Activated CD4-positive, alpha-beta T cell treated with anti-CD3 and anti-CD28 coated beads for 36 hours (primary cell): ENCODE measurements at regions of chr12 and their contacts with region 1.

Region 1: DNA sequence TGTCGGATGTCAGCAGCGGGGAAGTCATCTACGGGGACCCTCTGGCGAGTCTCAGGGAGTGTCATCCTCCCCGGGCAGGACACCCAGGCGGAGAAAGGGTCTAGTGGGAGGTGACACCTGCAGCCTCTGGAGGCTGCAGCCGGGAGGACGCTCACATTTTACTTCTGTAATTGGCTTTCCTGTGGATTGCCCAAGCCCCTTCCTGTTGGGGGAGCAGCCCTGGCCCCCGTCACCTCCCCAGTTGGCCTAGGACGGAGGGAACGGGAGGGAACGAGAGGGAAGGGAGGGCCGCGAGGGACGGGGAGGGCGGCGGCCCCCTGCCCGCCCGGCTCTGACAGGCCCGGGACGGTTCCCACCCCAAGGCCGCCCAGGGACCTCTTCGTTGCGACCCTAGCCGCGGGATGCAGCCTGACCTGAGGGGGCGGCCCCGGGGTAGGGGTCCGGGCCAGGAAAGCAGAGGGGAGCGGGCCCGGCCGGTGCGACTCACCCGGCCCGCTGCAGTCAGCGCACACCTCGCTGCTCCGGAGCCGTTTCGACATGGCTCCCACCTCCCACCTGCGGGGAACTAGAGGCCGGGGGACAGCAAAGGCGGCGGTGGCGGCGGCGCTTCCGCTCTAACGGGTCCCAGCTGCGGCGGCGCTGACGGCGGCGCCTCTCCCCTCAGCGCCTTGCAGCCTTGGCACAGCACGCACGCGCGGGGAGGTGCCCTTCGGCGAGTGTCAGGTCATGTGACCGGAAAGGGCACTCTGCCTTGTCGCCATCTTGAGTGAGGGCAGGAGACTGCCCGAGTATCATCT is at the start of gene GIT2:
- DNase-seq: peak; percentile 98
- ATAC-seq: peak; percentile 85
- H3K4me3 Mint-ChIP-seq: peak within 1 kb of the TSS; percentile 99
- H3K27ac Mint-ChIP-seq: peak within 1 kb of the TSS; percentile 97
- H3K4me1 Mint-ChIP-seq: peaks cover 65% of the 10 kb centered on the region
- H3K27me3 Mint-ChIP-seq: no peaks in the 10 kb centered on the region
- total RNA-seq, gene GIT2: 50.2 to 58.2 TPM

Region 2: GRCh38 chr12:109477185-109477962 is 518.5 kb before region 1 on chr12 and contains the starts of genes KCTD10 and UBE3B:
- CTCF ChIA-PET with region 1: no interaction called
- POLR2A ChIA-PET with region 1: no interaction called
- intact Hi-C with region 1: loop called in 1 of 2 experiments (anchors 1 kb)
- DNase-seq: peak; percentile 92
- ATAC-seq: peak; percentile 97
- H3K4me3 Mint-ChIP-seq: peak within 1 kb of the TSS; percentile 95
- H3K27ac Mint-ChIP-seq: peak within 1 kb of the TSS; percentile 99
- H3K4me1 Mint-ChIP-seq: peaks cover 43% of the 10 kb centered on the region
- H3K27me3 Mint-ChIP-seq: no peaks in the 10 kb centered on the region
- total RNA-seq, gene KCTD10: 42.0 to 46.3 TPM
- total RNA-seq, gene UBE3B: 25.7 to 27.2 TPM

Region 3: DNA sequence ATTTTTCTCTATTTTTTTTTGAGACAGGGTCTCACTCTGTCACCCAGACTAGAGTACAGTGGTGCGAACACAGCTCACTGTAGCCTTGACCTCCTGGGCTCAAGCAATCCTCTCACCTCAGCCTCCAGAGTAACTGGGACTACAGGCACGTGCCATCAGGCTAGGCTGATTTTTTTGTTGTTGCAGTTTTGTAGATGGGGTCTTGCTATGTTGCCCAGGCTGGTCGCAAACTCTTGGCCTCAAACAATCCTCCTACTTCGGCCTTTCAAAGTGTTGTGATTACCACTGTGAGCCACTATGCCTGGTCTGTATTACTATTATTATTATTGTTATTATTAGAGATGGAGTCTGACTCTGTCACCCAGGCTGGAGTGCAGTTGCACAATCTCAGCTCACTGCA is 23.1 kb before region 1 on chr12:
- CTCF ChIA-PET with region 1: interaction called, 3 read pairs
- POLR2A ChIA-PET with region 1: interaction called, 11 read pairs
- intact Hi-C with region 1: loop called in 1 of 2 experiments (anchors 2 kb)
- DNase-seq: no peak
- ATAC-seq: no peak
- H3K4me3 Mint-ChIP-seq: no peak overlapping the region
- H3K27ac Mint-ChIP-seq: no peak overlapping the region
- H3K4me1 Mint-ChIP-seq: peaks cover 22% of the 10 kb centered on the region
- H3K27me3 Mint-ChIP-seq: no peaks in the 10 kb centered on the region

Region 4: DNA sequence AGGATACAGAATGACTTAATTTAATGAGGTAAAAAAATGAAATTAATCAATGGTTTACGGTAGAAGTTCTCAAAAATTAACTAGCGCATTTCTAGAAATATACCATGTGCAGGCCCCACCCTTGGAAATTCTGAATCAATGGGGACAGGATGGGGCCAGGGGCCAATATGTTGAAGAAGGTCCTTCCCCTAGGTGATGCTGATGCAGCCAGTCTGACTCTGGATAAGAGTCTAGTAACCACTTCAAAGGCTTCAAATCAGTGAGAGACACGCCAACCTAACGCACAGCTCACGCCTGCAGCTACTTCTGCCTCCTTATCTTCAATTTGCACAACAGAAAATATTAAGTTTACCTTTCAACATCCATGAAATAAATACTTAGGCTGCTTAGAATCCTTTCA is 14.6 kb before region 1 on chr12:
- CTCF ChIA-PET with region 1: interaction called, 4 read pairs
- POLR2A ChIA-PET with region 1: no interaction called
- intact Hi-C with region 1: loop called (anchors 1 to 2 kb)
- DNase-seq: peak; percentile 84
- ATAC-seq: peak; percentile 91
- H3K4me3 Mint-ChIP-seq: peak overlapping the region; percentile 44
- H3K27ac Mint-ChIP-seq: peak overlapping the region; percentile 93
- H3K4me1 Mint-ChIP-seq: peaks cover 69% of the 10 kb centered on the region
- H3K27me3 Mint-ChIP-seq: no peaks in the 10 kb centered on the region

Region 5: GRCh38 chr12:110039085-110039807 is 43.4 kb after region 1 on chr12:
- CTCF ChIA-PET with region 1: no interaction called
- POLR2A ChIA-PET with region 1: no interaction called
- intact Hi-C with region 1: loop called in 1 of 2 experiments (anchors 5 kb)
- DNase-seq: peak; percentile 56
- ATAC-seq: peak; percentile 67
- H3K4me3 Mint-ChIP-seq: no peak overlapping the region
- H3K27ac Mint-ChIP-seq: peak overlapping the region; percentile 87
- H3K4me1 Mint-ChIP-seq: peaks cover 37% of the 10 kb centered on the region
- H3K27me3 Mint-ChIP-seq: no peaks in the 10 kb centered on the region

Region 6: GRCh38 chr12:110048242-110049027 is 52.6 kb after region 1 on chr12 and contains the start of gene C12orf76:
- CTCF ChIA-PET with region 1: no interaction called
- POLR2A ChIA-PET with region 1: no interaction called
- intact Hi-C with region 1: loop called in 1 of 2 experiments (anchors 1 kb)
- DNase-seq: peak; percentile 95
- ATAC-seq: peak; percentile 100
- H3K4me3 Mint-ChIP-seq: peak within 1 kb of the TSS; percentile 78
- H3K27ac Mint-ChIP-seq: peak within 1 kb of the TSS; percentile 94
- H3K4me1 Mint-ChIP-seq: peaks cover 28% of the 10 kb centered on the region
- H3K27me3 Mint-ChIP-seq: no peaks in the 10 kb centered on the region
- total RNA-seq, gene C12orf76: 10.2 to 10.5 TPM

Region 7: GRCh38 chr12:110583137-110584059 is 587.5 kb after region 1 on chr12 and contains the start of gene PPTC7:
- CTCF ChIA-PET with region 1: no interaction called
- POLR2A ChIA-PET with region 1: no interaction called
- intact Hi-C with region 1: loop called in 1 of 2 experiments (anchors 5 kb)
- DNase-seq: peak; percentile 99
- ATAC-seq: peak; percentile 86
- H3K4me3 Mint-ChIP-seq: peak within 1 kb of the TSS; percentile 91
- H3K27ac Mint-ChIP-seq: peak within 1 kb of the TSS; percentile 99
- H3K4me1 Mint-ChIP-seq: peaks cover 59% of the 10 kb centered on the region
- H3K27me3 Mint-ChIP-seq: no peaks in the 10 kb centered on the region
- total RNA-seq, gene PPTC7: 33.4 to 36.5 TPM